CD8-positive, alpha-beta T cell (primary cell): ENCODE measurements at regions of chr16 and their contacts with region 1.

Region 1: DNA sequence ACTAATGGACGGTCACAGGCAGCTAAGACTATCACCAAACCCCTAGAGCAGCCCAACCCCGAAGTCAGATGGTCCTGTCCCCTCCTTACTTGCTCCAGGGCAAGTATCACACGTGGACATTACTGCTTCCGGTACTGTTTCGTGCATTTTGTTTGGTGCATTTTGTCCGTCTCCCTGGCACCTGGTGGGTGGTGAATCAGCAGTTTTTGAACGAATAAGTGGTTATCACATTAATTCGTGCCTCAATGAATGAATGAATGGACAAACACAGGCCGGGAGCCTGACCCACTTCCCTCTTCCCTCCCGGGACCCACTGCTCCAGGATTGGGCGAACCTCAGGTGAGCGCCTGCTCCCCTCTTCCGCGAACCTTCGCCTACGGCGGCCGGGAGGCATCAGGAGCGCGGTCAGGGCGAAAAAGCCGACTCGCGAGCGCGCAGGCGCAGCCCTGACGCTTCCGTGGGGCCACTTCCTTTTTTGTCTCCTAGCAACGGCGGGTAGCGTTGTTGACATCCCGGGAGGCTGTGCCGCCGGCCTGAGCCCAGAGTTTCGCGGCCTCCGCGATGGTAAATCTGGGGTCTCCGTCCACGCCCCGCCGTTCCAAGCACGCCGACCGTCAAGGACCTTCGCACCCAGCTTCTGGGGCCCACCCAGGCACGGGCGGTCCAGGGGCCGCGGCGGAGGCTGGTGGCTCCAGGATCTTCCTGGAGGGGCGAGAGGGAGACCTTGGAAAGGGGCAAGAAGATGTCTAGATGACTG is at the start of gene DYNLRB2:
- DNase-seq: peak; percentile 84 to 97 (median 89)
- ATAC-seq: peak; percentile 89
- H3K4me3 ChIP-seq: peak within 1 kb of the TSS; percentile 69 to 78
- H3K4me3 Mint-ChIP-seq: peak within 1 kb of the TSS; percentile 95
- H3K27ac ChIP-seq: peak within 1 kb of the TSS; percentile 73 to 80
- H3K27ac Mint-ChIP-seq: peak within 1 kb of the TSS; percentile 95
- H3K4me1 ChIP-seq: peaks cover 9% of the 10 kb centered on the region
- H3K4me1 Mint-ChIP-seq: peaks cover 18% of the 10 kb centered on the region
- H3K27me3 ChIP-seq: no peaks in the 10 kb centered on the region
- H3K27me3 Mint-ChIP-seq: peaks cover 8% of the 10 kb centered on the region
- CTCF ChIP-seq: no peak
- total RNA-seq, gene DYNLRB2: not detected

Region 2: GRCh38 chr16:80564394-80564793 is 23.7 kb after region 1 on chr16:
- CTCF ChIA-PET with region 1: interaction called, 3 read pairs
- POLR2A ChIA-PET with region 1: no interaction called
- intact Hi-C with region 1: loop called in 1 of 2 experiments (anchors 2 kb)
- DNase-seq: peak in 2 of 9 experiments; percentile 21 to 50
- ATAC-seq: peak; percentile 46
- H3K4me3 ChIP-seq: peak overlapping the region in 1 of 2 experiments; percentile 1
- H3K4me3 Mint-ChIP-seq: peak overlapping the region; percentile 38
- H3K27ac ChIP-seq: peak overlapping the region in 1 of 2 experiments; percentile 38
- H3K27ac Mint-ChIP-seq: peak overlapping the region; percentile 81
- H3K4me1 ChIP-seq: peaks cover 19% of the 10 kb centered on the region
- H3K4me1 Mint-ChIP-seq: peaks cover 25% of the 10 kb centered on the region
- H3K27me3 ChIP-seq: no peaks in the 10 kb centered on the region
- H3K27me3 Mint-ChIP-seq: no peaks in the 10 kb centered on the region
- CTCF ChIP-seq: no peak

Region 3: GRCh38 chr16:80591071-80591915 is 50.6 kb after region 1 on chr16:
- CTCF ChIA-PET with region 1: no interaction called
- POLR2A ChIA-PET with region 1: no interaction called
- intact Hi-C with region 1: loop called (anchors 2 to 10 kb)
- DNase-seq: peak in 6 of 9 experiments; percentile 19 to 81 (median 49)
- ATAC-seq: peak; percentile 84
- H3K4me3 ChIP-seq: peak overlapping the region; percentile 7 to 23
- H3K4me3 Mint-ChIP-seq: peak overlapping the region; percentile 31
- H3K27ac ChIP-seq: no peak overlapping the region
- H3K27ac Mint-ChIP-seq: peak overlapping the region; percentile 19
- H3K4me1 ChIP-seq: peaks cover 14% of the 10 kb centered on the region
- H3K4me1 Mint-ChIP-seq: peaks cover 24% of the 10 kb centered on the region
- H3K27me3 ChIP-seq: no peaks in the 10 kb centered on the region
- H3K27me3 Mint-ChIP-seq: peaks cover 3% of the 10 kb centered on the region
- CTCF ChIP-seq: no peak

Region 4: DNA sequence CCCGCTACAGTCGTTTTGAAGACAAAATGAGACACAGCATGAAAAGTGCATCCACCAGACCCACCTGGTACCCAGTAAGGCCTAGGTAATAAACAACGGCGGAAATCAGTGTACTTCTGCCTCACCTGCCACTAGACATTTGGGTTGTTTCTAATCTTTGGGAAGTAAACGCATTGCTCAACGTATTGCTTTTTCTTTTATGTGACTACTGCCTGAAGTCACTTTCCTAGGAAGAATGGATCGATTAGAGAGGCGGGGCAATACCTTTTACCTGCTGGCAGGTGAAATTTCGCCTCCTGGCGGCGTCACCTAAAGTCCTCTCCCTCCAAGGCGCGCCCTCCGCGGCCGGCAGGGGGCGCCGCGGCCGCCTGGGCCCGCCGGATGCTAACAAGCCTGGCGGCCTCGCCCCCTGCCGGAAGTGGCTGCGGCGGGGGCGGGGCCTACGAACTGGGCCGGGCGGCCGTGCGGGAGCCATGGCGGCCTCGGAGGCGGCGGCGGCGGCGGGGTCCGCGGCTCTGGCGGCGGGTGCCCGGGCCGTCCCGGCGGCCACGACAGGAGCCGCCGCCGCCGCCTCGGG is 494.8 kb after region 1 on chr16 and contains the start of gene ATMIN:
- CTCF ChIA-PET with region 1: no interaction called
- POLR2A ChIA-PET with region 1: no interaction called
- intact Hi-C with region 1: loop called in 1 of 2 experiments (anchors 5 kb)
- DNase-seq: peak; percentile 79 to 94 (median 90)
- ATAC-seq: peak; percentile 97
- H3K4me3 ChIP-seq: peak within 1 kb of the TSS; percentile 47 to 59
- H3K4me3 Mint-ChIP-seq: peak within 1 kb of the TSS; percentile 87
- H3K27ac ChIP-seq: peak within 1 kb of the TSS in 1 of 2 experiments; percentile 34
- H3K27ac Mint-ChIP-seq: peak within 1 kb of the TSS; percentile 82
- H3K4me1 ChIP-seq: peaks cover 20% of the 10 kb centered on the region
- H3K4me1 Mint-ChIP-seq: peaks cover 34% of the 10 kb centered on the region
- H3K27me3 ChIP-seq: no peaks in the 10 kb centered on the region
- H3K27me3 Mint-ChIP-seq: no peaks in the 10 kb centered on the region
- CTCF ChIP-seq: peak; percentile 99
- total RNA-seq, gene ATMIN: 32.2 to 35.1 TPM